ENCODE measurements at regions of chr22 and their contacts with region 1.

Region 1: DNA sequence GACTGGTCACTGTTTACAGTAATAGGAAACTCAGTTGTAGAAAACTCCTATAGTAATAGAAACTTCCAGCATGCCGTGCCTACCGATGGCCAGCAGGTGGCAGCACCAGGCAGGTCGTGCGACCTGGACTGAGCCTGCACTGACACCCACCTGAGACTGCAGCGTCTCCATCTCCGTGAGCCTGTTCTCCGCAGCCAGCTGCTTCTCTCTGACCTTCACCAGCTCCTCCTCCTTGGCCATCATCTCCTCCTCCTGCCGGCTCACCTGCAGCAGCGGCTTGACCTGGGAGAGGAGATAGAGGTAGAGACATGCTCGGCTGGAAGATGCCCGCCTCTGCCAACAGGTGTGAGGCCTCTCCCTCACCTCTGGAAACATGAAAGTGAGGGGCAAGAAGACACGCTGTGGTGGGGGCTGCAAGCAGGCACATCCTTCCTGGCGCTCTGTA is 48.5 kb downstream of the APOL1 start:
- DNase-seq: peak in 3 of 4 donors; percentile 50 to 91 (median 78)
- ATAC-seq: peak; percentile 75
- H3K4me3 ChIP-seq: no peak overlapping the region
- H3K27ac ChIP-seq: peak overlapping the region in 1 of 2 donors; percentile 28
- H3K4me1 ChIP-seq: peaks cover 0 to 3% of the 10 kb centered on the region in 2 donors
- H3K27me3 ChIP-seq: no peaks in the 10 kb centered on the region
- CTCF ChIP-seq: peak; percentile 90 to 92

Region 2: GRCh38 chr22:36470162-36470993 is 169.0 kb after region 1 on chr22:
- intact Hi-C with region 1: loop called in 1 of 2 experiments (anchors 5 kb)
- DNase-seq: peak; percentile 78 to 90 (median 88)
- ATAC-seq: peak; percentile 87
- H3K4me3 ChIP-seq: no peak overlapping the region
- H3K27ac ChIP-seq: peak overlapping the region; percentile 17 to 50
- H3K4me1 ChIP-seq: peaks cover 28 to 74% of the 10 kb centered on the region in 2 donors
- H3K27me3 ChIP-seq: no peaks in the 10 kb centered on the region
- CTCF ChIP-seq: peak; percentile 92 to 95

Region 3: GRCh38 chr22:36528341-36528740 is 226.9 kb after region 1 on chr22:
- intact Hi-C with region 1: no loop called
- DNase-seq: no peak
- ATAC-seq: peak; percentile 3
- H3K4me3 ChIP-seq: peak overlapping the region; percentile 87 to 96
- H3K27ac ChIP-seq: peak overlapping the region; percentile 89 to 94
- H3K4me1 ChIP-seq: peaks cover 13 to 34% of the 10 kb centered on the region in 2 donors
- H3K27me3 ChIP-seq: no peaks in the 10 kb centered on the region
- CTCF ChIP-seq: no peak

Measured in left lung (tissue), 14 donors.